Activated T-helper 2 cell treated with anti-CD3 and anti-CD28 coated beads, Interferon-gamma antibody, Interleukin-2, Interleukin-4, amounts not matched to agents 10 μg/mL and 5 μg/mL and 100 μg/mL, durations not matched to agents 14 hours and 24 hours and 36 hours (primary cell): ENCODE measurements at regions of chr13 and their contacts with region 1.

Region 1: GRCh38 chr13:32515246-32515645 is 23.3 kb downstream of the N4BP2L2 start:
- DNase-seq: no peak
- H3K4me3 Mint-ChIP-seq: no peak overlapping the region
- H3K27ac Mint-ChIP-seq: no peak overlapping the region
- H3K4me1 Mint-ChIP-seq: peaks cover 12% of the 10 kb centered on the region
- H3K27me3 Mint-ChIP-seq: no peaks in the 10 kb centered on the region

Region 2: GRCh38 chr13:32472194-32472621 is 43.0 kb before region 1 on chr13:
- intact Hi-C with region 1: loop called (anchors 1 kb)
- DNase-seq: no peak
- H3K4me3 Mint-ChIP-seq: no peak overlapping the region
- H3K27ac Mint-ChIP-seq: peak overlapping the region; percentile 84
- H3K4me1 Mint-ChIP-seq: peaks cover 16% of the 10 kb centered on the region
- H3K27me3 Mint-ChIP-seq: no peaks in the 10 kb centered on the region